Cardiac septum (tissue), 1 donor: ENCODE measurements at regions of chr17 and their contacts with region 1.

Region 1: GRCh38 chr17:76304226-76305134 is 3.6 kb downstream of the QRICH2 start:
- DNase-seq: no peak

Region 2: DNA sequence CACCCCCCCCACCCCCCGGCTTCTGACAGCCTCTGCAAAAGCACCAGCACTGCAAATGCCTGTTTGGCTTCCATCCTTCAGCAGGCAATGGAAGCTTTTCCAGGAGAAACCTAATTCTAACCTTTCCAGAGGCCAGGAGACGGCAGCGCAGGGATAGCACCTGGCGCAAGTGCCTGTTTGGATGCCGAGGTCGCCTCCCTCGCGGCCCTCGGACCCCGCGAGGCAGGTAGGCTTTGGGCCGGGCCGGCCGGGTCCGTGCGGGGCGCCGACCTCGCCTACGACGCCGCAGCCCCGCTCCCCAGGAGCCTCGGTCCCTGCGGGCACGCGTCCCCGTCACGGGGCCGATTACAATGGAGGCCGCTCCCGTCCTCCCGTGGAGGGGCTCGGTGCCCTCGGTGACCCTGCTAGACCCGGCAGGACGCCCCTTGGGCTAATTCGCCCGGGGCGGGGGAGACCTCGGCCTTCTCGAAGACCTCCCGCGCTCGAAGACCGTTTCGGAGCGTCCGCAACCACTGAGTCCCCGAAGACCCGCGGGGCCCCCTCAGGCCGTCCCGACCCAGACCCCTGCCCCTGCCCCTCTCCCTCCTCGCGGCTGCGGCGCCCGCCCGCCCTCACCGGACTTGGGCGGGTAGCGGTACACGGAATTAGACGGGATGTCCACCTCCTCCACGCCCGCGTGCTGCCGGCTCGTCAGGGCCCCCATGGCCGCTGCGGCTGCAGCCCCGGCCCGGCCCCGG is 64.8 kb before region 1 on chr17:
- intact Hi-C with region 1: no loop called
- DNase-seq: no peak

Region 3: GRCh38 chr17:76264755-76265596 is 39.5 kb before region 1 on chr17 and contains the start of gene UBALD2:
- intact Hi-C with region 1: no loop called
- DNase-seq: peak; percentile 100
- total RNA-seq, gene UBALD2: 22.7 TPM

Region 4: GRCh38 chr17:76327696-76328095 is 23.2 kb after region 1 on chr17:
- intact Hi-C with region 1: no loop called
- DNase-seq: no peak

Region 5: GRCh38 chr17:76397687-76398487 is 93.4 kb after region 1 on chr17:
- intact Hi-C with region 1: loop called (anchors 2 kb)
- DNase-seq: peak; percentile 91

Region 6: GRCh38 chr17:76458580-76459490 is 154.4 kb after region 1 on chr17:
- intact Hi-C with region 1: loop called (anchors 5 kb)
- DNase-seq: no peak

Region 7: DNA sequence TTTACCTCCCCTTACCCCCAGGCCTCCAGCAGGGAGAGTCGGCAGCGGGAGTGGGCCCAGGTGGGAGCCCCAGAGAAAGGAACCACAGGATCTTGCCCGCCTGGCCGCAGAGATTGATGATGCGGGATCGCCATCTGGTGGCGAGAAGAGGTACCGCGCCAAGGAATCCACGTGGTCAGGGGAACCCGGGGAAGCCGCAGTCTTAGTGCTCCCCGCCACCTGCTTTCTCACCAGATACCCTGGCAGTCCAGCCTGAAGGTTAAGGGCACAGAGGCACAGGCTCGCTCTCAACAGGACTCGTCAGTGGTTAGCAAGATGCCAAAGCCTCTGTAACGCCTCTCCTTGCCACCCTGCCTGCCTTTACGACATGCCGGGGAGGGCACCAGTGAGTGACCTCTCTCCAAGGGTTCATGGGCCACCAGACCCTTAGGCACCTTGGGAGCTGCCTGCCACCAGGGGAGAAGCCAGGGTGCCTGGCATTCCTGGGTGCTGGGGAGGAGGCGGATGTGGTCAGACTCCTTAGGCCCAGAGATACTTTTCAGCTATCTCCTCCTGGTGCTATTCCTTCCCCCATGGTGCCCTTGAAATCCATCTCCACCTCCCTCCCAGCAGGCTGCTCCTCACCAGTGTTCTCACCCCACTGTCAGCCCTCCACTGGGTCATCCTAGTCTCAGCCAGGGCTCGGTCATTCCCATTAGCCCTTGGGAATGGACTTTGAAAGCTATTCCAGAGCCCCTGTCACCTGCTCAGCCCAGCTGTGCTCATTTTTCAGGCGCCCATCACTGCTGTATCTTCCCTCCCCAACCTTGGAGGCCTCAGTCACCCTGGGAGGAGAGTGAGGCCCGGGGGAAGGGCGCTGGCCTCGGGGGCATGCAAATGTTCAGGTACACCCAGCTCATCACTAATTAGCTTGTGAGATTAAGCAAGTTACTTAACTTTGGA is 202.2 kb after region 1 on chr17:
- intact Hi-C with region 1: loop called (anchors 5 kb)
- DNase-seq: peak; percentile 93